Naive thymus-derived CD4-positive, alpha-beta T cell (primary cell): ENCODE measurements at regions of chr2 and their contacts with region 1.

Region 1: GRCh38 chr2:240595496-240596470 is 9.2 kb downstream of the CAPN10 start:
- DNase-seq: peak in 6 of 9 donors; percentile 15 to 45 (median 32)
- ATAC-seq: no peak
- H3K4me3 ChIP-seq: no peak overlapping the region
- H3K4me3 Mint-ChIP-seq: no peak overlapping the region
- H3K27ac ChIP-seq: no peak overlapping the region
- H3K27ac Mint-ChIP-seq: no peak overlapping the region
- H3K4me1 ChIP-seq: no peaks in the 10 kb centered on the region
- H3K4me1 Mint-ChIP-seq: peaks cover 0 to 7% (median 4%) of the 10 kb centered on the region in 7 donors
- H3K27me3 ChIP-seq: no peaks in the 10 kb centered on the region
- H3K27me3 Mint-ChIP-seq: no peaks in the 10 kb centered on the region

Region 2: DNA sequence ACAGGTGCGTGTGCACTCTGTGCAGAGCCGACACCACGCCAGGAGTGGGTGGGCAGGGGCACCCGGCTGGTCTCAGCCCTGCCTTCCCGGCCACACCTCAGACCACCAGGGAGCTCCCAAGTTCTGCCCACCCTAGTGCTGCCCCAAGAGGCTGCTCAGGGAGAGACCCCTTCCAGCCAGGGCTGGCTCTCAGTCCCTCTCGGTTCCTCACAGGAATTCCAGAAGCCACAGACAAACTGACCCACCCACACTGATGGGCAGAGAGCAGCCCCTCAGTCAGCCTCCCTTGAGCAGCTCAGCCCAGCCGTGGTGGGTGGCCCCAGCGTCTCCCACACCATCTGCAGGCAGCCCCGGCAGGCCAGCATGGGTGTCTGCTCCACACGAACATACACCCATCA is 126.5 kb before region 1 on chr2:
- CTCF ChIA-PET with region 1: no interaction called
- POLR2A ChIA-PET with region 1: no interaction called
- intact Hi-C with region 1: no loop called
- DNase-seq: no peak
- ATAC-seq: no peak
- H3K4me3 ChIP-seq: no peak overlapping the region
- H3K4me3 Mint-ChIP-seq: no peak overlapping the region
- H3K27ac ChIP-seq: no peak overlapping the region
- H3K27ac Mint-ChIP-seq: no peak overlapping the region
- H3K4me1 ChIP-seq: no peaks in the 10 kb centered on the region
- H3K4me1 Mint-ChIP-seq: peaks cover 0 to 7% (median 0%) of the 10 kb centered on the region in 7 donors
- H3K27me3 ChIP-seq: no peaks in the 10 kb centered on the region
- H3K27me3 Mint-ChIP-seq: no peaks in the 10 kb centered on the region

Region 3: GRCh38 chr2:240704651-240705050 is 108.9 kb after region 1 on chr2:
- CTCF ChIA-PET with region 1: no interaction called
- POLR2A ChIA-PET with region 1: no interaction called
- intact Hi-C with region 1: loop called in 1 of 2 experiments (anchors 10 kb)
- DNase-seq: peak in 7 of 9 donors; percentile 38 to 62 (median 55)
- ATAC-seq: peak; percentile 62
- H3K4me3 ChIP-seq: no peak overlapping the region
- H3K4me3 Mint-ChIP-seq: peak overlapping the region; percentile 5 to 78 (median 57)
- H3K27ac ChIP-seq: no peak overlapping the region
- H3K27ac Mint-ChIP-seq: peak overlapping the region in 5 of 9 donors; percentile 1 to 78 (median 16)
- H3K4me1 ChIP-seq: peaks cover 10 to 22% of the 10 kb centered on the region in 2 donors
- H3K4me1 Mint-ChIP-seq: peaks cover 15 to 20% (median 17%) of the 10 kb centered on the region in 7 donors
- H3K27me3 ChIP-seq: peaks cover 0 to 3% of the 10 kb centered on the region in 2 donors
- H3K27me3 Mint-ChIP-seq: peaks cover 5 to 46% (median 10%) of the 10 kb centered on the region in 5 donors

Region 4: DNA sequence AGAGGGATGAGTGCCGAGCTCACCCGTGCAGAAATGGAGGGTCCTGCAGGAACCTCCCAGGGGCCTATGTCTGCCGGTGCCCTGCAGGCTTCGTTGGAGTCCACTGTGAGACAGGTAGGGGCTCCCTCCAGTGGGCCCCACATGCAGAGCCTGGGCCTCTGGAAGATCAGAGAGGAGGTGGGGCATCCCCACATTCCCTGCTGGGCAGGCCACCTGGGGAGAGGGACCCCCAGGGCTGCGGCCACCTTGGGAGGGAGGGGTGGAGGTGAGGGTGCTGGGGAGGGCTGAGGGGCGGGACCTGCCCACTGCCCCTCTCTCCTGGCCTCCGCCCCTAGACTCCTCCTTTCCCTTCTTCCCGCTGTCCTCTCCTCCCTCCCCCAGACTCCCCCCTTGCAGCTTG is 467.8 kb after region 1 on chr2:
- CTCF ChIA-PET with region 1: no interaction called
- POLR2A ChIA-PET with region 1: no interaction called
- intact Hi-C with region 1: no loop called
- DNase-seq: peak in 2 of 9 donors; percentile 12 to 19
- ATAC-seq: peak; percentile 31
- H3K4me3 ChIP-seq: no peak overlapping the region
- H3K4me3 Mint-ChIP-seq: peak overlapping the region in 7 of 10 donors; percentile 55 to 78 (median 66)
- H3K27ac ChIP-seq: no peak overlapping the region
- H3K27ac Mint-ChIP-seq: peak overlapping the region in 4 of 9 donors; percentile 22 to 81 (median 58)
- H3K4me1 ChIP-seq: peaks cover 0 to 8% of the 10 kb centered on the region in 2 donors
- H3K4me1 Mint-ChIP-seq: peaks cover 0 to 9% (median 0%) of the 10 kb centered on the region in 7 donors
- H3K27me3 ChIP-seq: no peaks in the 10 kb centered on the region
- H3K27me3 Mint-ChIP-seq: peaks cover 0 to 5% (median 0%) of the 10 kb centered on the region in 5 donors